ENCODE measurements at regions of chr3 and their contacts with region 1.

Region 1: DNA sequence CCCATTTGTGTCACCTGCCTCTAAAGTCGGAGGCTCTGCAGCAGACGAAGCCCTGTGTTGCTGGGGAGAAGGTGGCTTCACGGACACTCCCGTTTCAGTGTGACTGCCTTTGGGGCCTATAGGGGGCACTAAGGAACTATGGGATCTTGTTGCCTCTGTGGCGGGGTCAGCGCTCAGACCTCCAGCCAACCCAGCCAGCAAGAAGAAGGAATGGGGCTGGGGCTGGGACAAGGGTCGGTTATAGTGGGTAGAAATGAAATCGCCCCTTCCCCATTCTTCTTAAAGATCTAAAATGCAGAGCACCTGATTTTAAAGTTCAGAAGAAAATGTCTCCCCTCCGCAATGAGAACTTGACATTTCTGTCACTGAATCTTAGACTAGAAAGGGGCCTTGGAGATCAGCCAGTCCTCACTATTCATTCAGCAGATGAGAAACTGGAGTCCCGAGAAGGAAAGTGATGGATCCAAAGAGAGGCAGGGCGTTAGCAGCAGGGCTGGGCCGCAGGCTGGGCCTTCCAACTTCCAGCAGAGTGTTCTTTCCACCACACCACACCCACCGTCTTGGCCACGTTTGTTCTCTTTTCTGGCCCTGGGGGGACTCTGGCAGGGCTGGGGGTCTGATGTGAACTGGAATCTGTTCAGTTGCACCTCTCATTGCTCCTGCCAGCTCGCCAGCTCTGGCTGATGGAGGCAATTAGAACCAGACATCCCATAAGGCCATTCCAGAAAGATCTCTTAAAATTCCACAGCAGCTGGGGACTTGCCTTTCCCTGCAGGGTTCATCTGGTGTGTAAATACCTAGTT is 195.4 kb downstream of the OPA1 start:
- DNase-seq: peak; percentile 64 to 75 (median 70)
- ATAC-seq: peak; percentile 75 to 96 (median 94)
- H3K4me3 ChIP-seq: no peak overlapping the region
- H3K27ac ChIP-seq: peak overlapping the region in 3 of 12 donors; percentile 9 to 15 (median 9)
- H3K4me1 ChIP-seq: peaks cover 0 to 18% (median 8%) of the 10 kb centered on the region in 12 donors
- H3K27me3 ChIP-seq: peaks cover 0 to 60% (median 4%) of the 10 kb centered on the region in 9 donors
- CTCF ChIP-seq: peak; percentile 66 to 89 (median 82)
- POLR2A ChIP-seq: no peak

Region 2: DNA sequence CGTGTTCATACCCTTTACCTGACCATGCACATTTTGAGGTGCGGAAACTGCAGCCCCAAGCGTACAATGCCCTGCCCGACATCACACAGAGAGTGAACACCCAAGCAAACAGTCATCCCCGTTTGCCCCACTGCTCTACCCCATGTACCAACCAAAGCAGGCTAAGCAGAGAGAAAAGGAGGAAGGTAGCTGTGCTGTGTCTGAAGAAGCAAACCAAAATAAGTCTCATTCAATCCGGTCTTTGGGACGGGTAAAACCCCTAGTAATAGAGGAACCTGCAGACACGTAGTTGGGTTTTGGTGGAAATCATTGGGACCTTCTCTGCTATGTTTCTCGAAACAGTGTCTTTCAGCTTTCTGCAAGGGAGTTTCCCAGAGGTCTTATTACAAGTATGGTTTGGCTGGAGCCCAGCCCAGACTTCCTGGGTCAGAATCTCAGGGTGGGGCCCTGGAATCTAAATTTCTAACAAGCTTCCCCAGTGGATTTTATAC is 182.9 kb after region 1 on chr3:
- intact Hi-C with region 1: loop called in 4 of 10 experiments (anchors 5 to 10 kb)
- DNase-seq: peak in 1 of 5 donors; percentile 43
- ATAC-seq: peak in 1 of 4 donors; percentile 24
- H3K4me3 ChIP-seq: no peak overlapping the region
- H3K27ac ChIP-seq: no peak overlapping the region
- H3K4me1 ChIP-seq: peaks cover 0 to 16% (median 0%) of the 10 kb centered on the region in 12 donors
- H3K27me3 ChIP-seq: peaks cover 0 to 10% (median 0%) of the 10 kb centered on the region in 9 donors
- CTCF ChIP-seq: no peak
- POLR2A ChIP-seq: no peak

Region 3: GRCh38 chr3:193982258-193982659 is 193.9 kb after region 1 on chr3:
- intact Hi-C with region 1: loop called in 3 of 10 experiments (anchors 5 to 10 kb)
- DNase-seq: peak; percentile 82 to 89 (median 86)
- ATAC-seq: peak; percentile 78 to 88 (median 86)
- H3K4me3 ChIP-seq: no peak overlapping the region
- H3K27ac ChIP-seq: peak overlapping the region in 4 of 12 donors; percentile 10 to 26 (median 16)
- H3K4me1 ChIP-seq: peaks cover 0 to 58% (median 32%) of the 10 kb centered on the region in 12 donors
- H3K27me3 ChIP-seq: peaks cover 0 to 8% (median 0%) of the 10 kb centered on the region in 9 donors
- CTCF ChIP-seq: no peak
- POLR2A ChIP-seq: no peak

Region 4: DNA sequence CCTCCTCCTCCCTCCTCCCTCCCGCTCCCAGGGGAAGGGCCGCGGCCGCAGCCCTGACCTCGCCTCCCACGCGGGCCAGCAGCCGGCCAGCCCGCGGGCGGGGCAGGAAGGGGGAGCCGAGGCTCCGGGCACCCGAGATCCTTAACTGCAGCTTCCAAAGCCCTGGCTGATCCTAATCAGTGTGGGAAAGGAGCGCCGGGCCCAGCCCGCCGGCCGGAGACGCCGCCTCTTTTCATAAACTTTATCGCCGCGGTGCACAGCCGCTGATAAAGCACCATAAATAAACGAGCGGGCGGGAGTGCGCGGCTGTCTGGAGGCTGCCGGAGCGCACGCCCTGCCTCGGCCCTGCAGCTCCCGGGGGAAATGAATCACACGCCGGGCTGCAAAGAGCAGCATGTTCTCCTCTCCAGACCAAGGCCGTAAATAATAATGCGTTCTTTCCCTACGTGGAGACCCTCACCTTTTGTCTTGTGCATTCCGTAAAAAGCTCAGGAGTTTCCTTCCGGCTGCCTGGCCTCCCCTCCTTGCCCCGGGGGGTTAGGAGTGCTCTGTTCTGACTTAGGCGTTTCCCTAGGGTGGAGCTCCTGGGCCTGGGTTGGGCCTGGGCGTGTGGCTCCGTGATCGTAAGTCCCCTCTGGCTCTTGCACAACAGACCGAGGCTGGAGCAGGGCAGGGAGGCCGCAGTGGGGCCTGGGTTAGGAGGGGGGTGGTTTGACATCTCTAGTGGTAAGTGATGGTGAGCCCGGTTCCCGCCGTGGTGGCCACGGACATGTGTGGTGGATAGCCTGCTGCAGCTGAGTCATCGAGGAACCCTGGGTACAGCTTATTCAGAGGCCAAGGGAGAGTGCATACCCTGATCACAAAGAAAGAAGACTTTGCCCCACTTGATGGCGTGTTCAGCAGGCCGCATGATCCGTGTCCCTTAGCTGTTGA is 215.0 kb after region 1 on chr3:
- intact Hi-C with region 1: loop called in 9 of 10 experiments (anchors 2 to 10 kb)
- DNase-seq: peak; percentile 92 to 95 (median 93)
- ATAC-seq: peak; percentile 85 to 95 (median 94)
- H3K4me3 ChIP-seq: peak overlapping the region in 11 of 12 donors; percentile 1 to 54 (median 51)
- H3K27ac ChIP-seq: peak overlapping the region; percentile 40 to 85 (median 74)
- H3K4me1 ChIP-seq: peaks cover 0 to 42% (median 31%) of the 10 kb centered on the region in 12 donors
- H3K27me3 ChIP-seq: peaks cover 0 to 13% (median 0%) of the 10 kb centered on the region in 9 donors
- CTCF ChIP-seq: no peak
- POLR2A ChIP-seq: no peak

Region 5: DNA sequence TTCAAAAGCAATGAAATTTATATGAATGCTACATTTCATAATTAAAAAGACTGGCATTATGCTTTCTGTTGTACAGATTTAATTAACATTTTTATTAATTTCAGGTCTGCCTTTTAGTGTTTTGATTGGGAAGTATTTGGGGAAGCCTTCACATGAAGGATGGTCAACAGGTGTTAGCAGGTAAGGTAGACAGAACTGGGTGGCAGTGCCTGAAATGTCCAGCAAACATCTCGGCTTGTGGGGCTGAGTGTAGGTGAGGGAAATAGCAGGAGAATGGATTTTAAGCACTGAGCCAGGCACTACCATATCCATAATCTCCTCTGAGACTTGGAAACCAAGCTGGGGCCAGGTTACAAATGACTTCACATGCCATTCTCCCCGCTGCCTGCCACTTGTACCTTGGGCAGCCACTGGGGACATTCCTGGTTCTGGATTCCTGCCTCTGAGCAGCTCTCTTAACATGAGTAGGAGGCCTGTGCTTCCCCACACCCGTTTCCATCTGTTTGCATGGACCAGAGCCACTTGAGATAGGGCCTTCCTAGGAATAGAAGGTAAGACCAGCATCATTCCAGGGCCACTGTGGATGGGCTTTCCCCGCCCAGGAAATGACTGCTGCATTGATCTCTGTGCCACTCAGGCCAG is 221.6 kb after region 1 on chr3:
- intact Hi-C with region 1: loop called in 6 of 10 experiments (anchors 5 to 10 kb)
- DNase-seq: no peak
- ATAC-seq: peak in 3 of 4 donors; percentile 57 to 74 (median 64)
- H3K4me3 ChIP-seq: no peak overlapping the region
- H3K27ac ChIP-seq: no peak overlapping the region
- H3K4me1 ChIP-seq: peaks cover 0 to 20% (median under 1%) of the 10 kb centered on the region in 12 donors
- H3K27me3 ChIP-seq: peaks cover 0 to 47% (median 9%) of the 10 kb centered on the region in 9 donors
- CTCF ChIP-seq: no peak
- POLR2A ChIP-seq: no peak

Region 6: GRCh38 chr3:194070634-194071409 is 282.4 kb after region 1 on chr3:
- intact Hi-C with region 1: loop called in 1 of 10 experiments (anchors 10 kb)
- DNase-seq: peak; percentile 88 to 93 (median 93)
- ATAC-seq: peak; percentile 89 to 92 (median 92)
- H3K4me3 ChIP-seq: peak overlapping the region; percentile 8 to 64 (median 53)
- H3K27ac ChIP-seq: peak overlapping the region; percentile 67 to 97 (median 86)
- H3K4me1 ChIP-seq: peaks cover 3 to 23% (median 15%) of the 10 kb centered on the region in 12 donors
- H3K27me3 ChIP-seq: peaks cover 0 to 29% (median 0%) of the 10 kb centered on the region in 9 donors
- CTCF ChIP-seq: no peak
- POLR2A ChIP-seq: no peak